ENCODE measurements at regions of chr3 and their contacts with region 1.

Region 1: DNA sequence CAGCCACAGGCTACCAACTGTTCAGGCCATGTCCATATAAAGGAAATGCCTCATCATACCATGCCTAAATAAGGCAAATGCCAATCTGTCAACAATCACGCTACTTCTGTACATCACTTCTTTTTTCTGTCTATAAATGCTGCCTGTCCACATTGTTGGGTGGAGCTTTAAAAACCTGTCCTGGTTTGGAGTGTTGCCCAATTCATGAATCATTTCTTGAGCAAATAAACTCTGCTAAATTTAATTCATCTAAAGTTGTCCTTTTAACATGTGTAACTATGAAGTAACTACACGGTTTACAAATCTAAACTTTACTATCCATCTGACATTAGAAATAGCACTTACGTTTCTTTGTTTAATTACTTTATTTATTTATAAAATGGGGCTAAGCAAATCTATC is 1092.0 kb downstream of the NSUN3 start:
- DNase-seq: peak; percentile 98
- ATAC-seq: peak; percentile 99
- H3K4me3 ChIP-seq: no peak overlapping the region
- H3K27ac ChIP-seq: peak overlapping the region; percentile 34; the same call in 1 of the 2 replicates
- H3K4me1 ChIP-seq: peaks cover 14% of the 10 kb centered on the region
- H3K27me3 ChIP-seq: no peaks in the 10 kb centered on the region
- CTCF ChIP-seq: no peak

Region 2: GRCh38 chr3:95280711-95281352 is 126.0 kb after region 1 on chr3:
- CTCF ChIA-PET with region 1: no interaction called
- POLR2A ChIA-PET with region 1: no interaction called
- intact Hi-C with region 1: loop called (anchors 5 kb)
- DNase-seq: peak; percentile 59
- ATAC-seq: peak; percentile 94
- H3K4me3 ChIP-seq: no peak overlapping the region
- H3K27ac ChIP-seq: peak overlapping the region; percentile 52
- H3K4me1 ChIP-seq: peaks cover 15% of the 10 kb centered on the region
- H3K27me3 ChIP-seq: no peaks in the 10 kb centered on the region
- CTCF ChIP-seq: no peak

Measured in PC-3 (cell line).